CD8-positive, alpha-beta T cell (primary cell): ENCODE measurements at regions of chr7 and their contacts with region 1.

Region 1: GRCh38 chr7:129054438-129055293 is at the start of gene TNPO3:
- DNase-seq: peak; percentile 77 to 94 (median 90)
- ATAC-seq: peak; percentile 86
- H3K4me3 ChIP-seq: peak within 1 kb of the TSS; percentile 80 to 89
- H3K4me3 Mint-ChIP-seq: peak within 1 kb of the TSS; percentile 96
- H3K27ac ChIP-seq: peak within 1 kb of the TSS; percentile 84 to 93
- H3K27ac Mint-ChIP-seq: peak within 1 kb of the TSS; percentile 98
- H3K4me1 ChIP-seq: peaks cover 29% of the 10 kb centered on the region
- H3K4me1 Mint-ChIP-seq: peaks cover 38% of the 10 kb centered on the region
- H3K27me3 ChIP-seq: no peaks in the 10 kb centered on the region
- H3K27me3 Mint-ChIP-seq: peaks cover 3% of the 10 kb centered on the region
- CTCF ChIP-seq: no peak
- total RNA-seq, gene TNPO3: 17.0 to 17.2 TPM

Region 2: GRCh38 chr7:127651556-127652332 is 1402.9 kb before region 1 on chr7 and contains the start of gene SND1:
- CTCF ChIA-PET with region 1: interaction called, 3 read pairs
- POLR2A ChIA-PET with region 1: no interaction called
- intact Hi-C with region 1: loop called in 1 of 2 experiments (anchors 10 kb)
- DNase-seq: peak; percentile 96 to 100 (median 98)
- ATAC-seq: peak; percentile 94
- H3K4me3 ChIP-seq: peak within 1 kb of the TSS; percentile 82 to 98
- H3K4me3 Mint-ChIP-seq: peak within 1 kb of the TSS; percentile 98
- H3K27ac ChIP-seq: peak within 1 kb of the TSS; percentile 92 to 98
- H3K27ac Mint-ChIP-seq: peak within 1 kb of the TSS; percentile 99
- H3K4me1 ChIP-seq: peaks cover 35% of the 10 kb centered on the region
- H3K4me1 Mint-ChIP-seq: peaks cover 50% of the 10 kb centered on the region
- H3K27me3 ChIP-seq: no peaks in the 10 kb centered on the region
- H3K27me3 Mint-ChIP-seq: no peaks in the 10 kb centered on the region
- CTCF ChIP-seq: no peak
- total RNA-seq, gene SND1: 87.7 to 101 TPM

Region 3: GRCh38 chr7:128739048-128739962 is 315.4 kb before region 1 on chr7 and contains the start of gene CALU:
- CTCF ChIA-PET with region 1: no interaction called
- POLR2A ChIA-PET with region 1: no interaction called
- intact Hi-C with region 1: loop called in 1 of 2 experiments (anchors 5 kb)
- DNase-seq: peak; percentile 84 to 96 (median 94)
- ATAC-seq: peak; percentile 91
- H3K4me3 ChIP-seq: peak within 1 kb of the TSS; percentile 90 to 93
- H3K4me3 Mint-ChIP-seq: peak within 1 kb of the TSS; percentile 98
- H3K27ac ChIP-seq: peak within 1 kb of the TSS; percentile 90 to 92
- H3K27ac Mint-ChIP-seq: peak within 1 kb of the TSS; percentile 96
- H3K4me1 ChIP-seq: peaks cover 18% of the 10 kb centered on the region
- H3K4me1 Mint-ChIP-seq: peaks cover 44% of the 10 kb centered on the region
- H3K27me3 ChIP-seq: no peaks in the 10 kb centered on the region
- H3K27me3 Mint-ChIP-seq: no peaks in the 10 kb centered on the region
- CTCF ChIP-seq: no peak
- total RNA-seq, gene CALU: 29.9 to 31.9 TPM

Region 4: DNA sequence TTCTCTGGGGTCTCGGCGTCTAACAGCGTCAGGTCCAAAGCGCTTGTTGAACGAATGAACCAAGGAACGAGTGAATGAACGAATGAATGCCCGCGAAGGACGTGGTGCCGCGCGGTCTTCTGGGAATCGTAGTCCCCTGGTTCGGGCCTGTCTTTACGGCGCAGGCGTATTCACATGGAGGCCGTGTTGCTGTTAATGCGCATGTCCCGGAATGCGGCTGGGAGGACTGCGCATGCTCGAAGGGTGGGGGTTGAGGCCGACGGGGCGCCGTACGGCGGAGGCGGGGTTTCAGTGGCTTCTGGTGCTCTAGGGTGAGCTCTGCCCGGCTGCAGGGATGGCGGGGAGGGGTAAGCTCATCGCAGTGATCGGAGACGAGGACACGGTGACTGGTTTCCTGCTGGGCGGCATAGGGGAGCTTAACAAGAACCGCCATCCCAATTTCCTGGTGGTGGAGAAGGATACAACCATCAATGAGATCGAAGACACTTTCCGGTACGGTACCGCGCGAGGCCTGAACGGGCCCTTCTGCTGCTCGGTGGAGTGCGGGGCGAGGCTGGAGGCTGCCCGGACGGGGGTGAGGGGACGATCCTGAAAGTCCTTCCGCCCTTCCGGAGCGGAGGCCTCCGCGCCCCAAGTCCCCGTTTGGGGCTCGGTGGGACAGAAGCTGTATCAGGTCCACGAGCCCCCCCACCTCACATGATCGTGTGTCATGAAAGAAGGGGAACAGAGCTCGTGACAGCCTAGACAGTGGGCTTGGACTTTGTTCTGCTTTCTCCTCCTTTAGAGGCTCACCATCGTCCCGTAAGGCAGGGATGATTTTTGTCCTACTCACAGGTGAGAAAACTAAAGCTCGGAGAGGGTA is 191.9 kb before region 1 on chr7 and contains the start of gene ATP6V1F:
- CTCF ChIA-PET with region 1: no interaction called
- POLR2A ChIA-PET with region 1: no interaction called
- intact Hi-C with region 1: loop called (anchors 1 to 2 kb)
- DNase-seq: peak; percentile 97 to 100 (median 99)
- ATAC-seq: peak; percentile 87
- H3K4me3 ChIP-seq: peak within 1 kb of the TSS; percentile 80 to 92
- H3K4me3 Mint-ChIP-seq: peak within 1 kb of the TSS; percentile 96
- H3K27ac ChIP-seq: peak within 1 kb of the TSS; percentile 71 to 74
- H3K27ac Mint-ChIP-seq: peak within 1 kb of the TSS; percentile 94
- H3K4me1 ChIP-seq: peaks cover 17% of the 10 kb centered on the region
- H3K4me1 Mint-ChIP-seq: peaks cover 34% of the 10 kb centered on the region
- H3K27me3 ChIP-seq: no peaks in the 10 kb centered on the region
- H3K27me3 Mint-ChIP-seq: no peaks in the 10 kb centered on the region
- CTCF ChIP-seq: no peak
- total RNA-seq, gene ATP6V1F: 54.8 to 59.3 TPM

Region 5: GRCh38 chr7:129005186-129005585 is 49.5 kb before region 1 on chr7:
- CTCF ChIA-PET with region 1: no interaction called
- POLR2A ChIA-PET with region 1: no interaction called
- intact Hi-C with region 1: no loop called
- DNase-seq: no peak
- ATAC-seq: no peak
- H3K4me3 ChIP-seq: no peak overlapping the region
- H3K4me3 Mint-ChIP-seq: no peak overlapping the region
- H3K27ac ChIP-seq: no peak overlapping the region
- H3K27ac Mint-ChIP-seq: no peak overlapping the region
- H3K4me1 ChIP-seq: no peaks in the 10 kb centered on the region
- H3K4me1 Mint-ChIP-seq: peaks cover 12% of the 10 kb centered on the region
- H3K27me3 ChIP-seq: no peaks in the 10 kb centered on the region
- H3K27me3 Mint-ChIP-seq: no peaks in the 10 kb centered on the region
- CTCF ChIP-seq: no peak

Region 6: GRCh38 chr7:130205084-130205947 is 1150.7 kb after region 1 on chr7 and contains the start of gene TMEM209:
- CTCF ChIA-PET with region 1: no interaction called
- POLR2A ChIA-PET with region 1: no interaction called
- intact Hi-C with region 1: loop called in 1 of 2 experiments (anchors 10 kb)
- DNase-seq: peak; percentile 85 to 97 (median 93)
- ATAC-seq: peak; percentile 96
- H3K4me3 ChIP-seq: peak within 1 kb of the TSS; percentile 95 to 99
- H3K4me3 Mint-ChIP-seq: peak within 1 kb of the TSS; percentile 100
- H3K27ac ChIP-seq: peak within 1 kb of the TSS; percentile 80 to 92
- H3K27ac Mint-ChIP-seq: peak within 1 kb of the TSS; percentile 100
- H3K4me1 ChIP-seq: peaks cover 5% of the 10 kb centered on the region
- H3K4me1 Mint-ChIP-seq: peaks cover 34% of the 10 kb centered on the region
- H3K27me3 ChIP-seq: no peaks in the 10 kb centered on the region
- H3K27me3 Mint-ChIP-seq: no peaks in the 10 kb centered on the region
- CTCF ChIP-seq: no peak
- total RNA-seq, gene TMEM209: 15.7 to 15.9 TPM